CD8-positive, alpha-beta T cell (primary cell): ENCODE measurements at regions of chr18 and their contacts with region 1.

Region 1: GRCh38 chr18:61817086-61817485 is 75.7 kb downstream of the RNF152 start:
- DNase-seq: no peak
- ATAC-seq: no peak
- H3K4me3 ChIP-seq: no peak overlapping the region
- H3K4me3 Mint-ChIP-seq: no peak overlapping the region
- H3K27ac ChIP-seq: no peak overlapping the region
- H3K27ac Mint-ChIP-seq: no peak overlapping the region
- H3K4me1 ChIP-seq: no peaks in the 10 kb centered on the region
- H3K4me1 Mint-ChIP-seq: no peaks in the 10 kb centered on the region
- H3K27me3 ChIP-seq: no peaks in the 10 kb centered on the region
- H3K27me3 Mint-ChIP-seq: no peaks in the 10 kb centered on the region
- CTCF ChIP-seq: no peak

Region 2: DNA sequence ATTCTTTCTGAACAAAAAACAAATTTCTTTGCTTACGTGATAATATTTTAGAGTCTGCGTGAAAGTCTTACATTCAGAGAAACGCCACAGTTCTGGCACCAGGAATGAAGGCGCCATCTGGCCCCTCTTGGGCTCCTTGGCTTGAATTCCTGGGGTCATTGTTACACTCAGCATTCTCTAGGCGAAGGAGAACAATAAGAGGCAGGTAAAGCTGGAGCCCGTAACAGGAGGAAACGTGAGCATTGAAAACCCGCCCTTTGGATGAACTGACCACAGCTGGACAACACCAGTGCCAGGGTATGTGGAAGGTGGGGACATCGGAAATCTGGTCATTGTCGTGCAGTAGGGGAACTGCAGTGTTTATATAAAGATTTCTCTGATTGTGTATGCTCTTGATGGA is 69.1 kb before region 1 on chr18:
- CTCF ChIA-PET with region 1: no interaction called
- POLR2A ChIA-PET with region 1: no interaction called
- intact Hi-C with region 1: loop called in 1 of 2 experiments (anchors 5 kb)
- DNase-seq: no peak
- ATAC-seq: no peak
- H3K4me3 ChIP-seq: no peak overlapping the region
- H3K4me3 Mint-ChIP-seq: no peak overlapping the region
- H3K27ac ChIP-seq: no peak overlapping the region
- H3K27ac Mint-ChIP-seq: no peak overlapping the region
- H3K4me1 ChIP-seq: no peaks in the 10 kb centered on the region
- H3K4me1 Mint-ChIP-seq: no peaks in the 10 kb centered on the region
- H3K27me3 ChIP-seq: no peaks in the 10 kb centered on the region
- H3K27me3 Mint-ChIP-seq: peaks cover 5% of the 10 kb centered on the region
- CTCF ChIP-seq: no peak

Region 3: DNA sequence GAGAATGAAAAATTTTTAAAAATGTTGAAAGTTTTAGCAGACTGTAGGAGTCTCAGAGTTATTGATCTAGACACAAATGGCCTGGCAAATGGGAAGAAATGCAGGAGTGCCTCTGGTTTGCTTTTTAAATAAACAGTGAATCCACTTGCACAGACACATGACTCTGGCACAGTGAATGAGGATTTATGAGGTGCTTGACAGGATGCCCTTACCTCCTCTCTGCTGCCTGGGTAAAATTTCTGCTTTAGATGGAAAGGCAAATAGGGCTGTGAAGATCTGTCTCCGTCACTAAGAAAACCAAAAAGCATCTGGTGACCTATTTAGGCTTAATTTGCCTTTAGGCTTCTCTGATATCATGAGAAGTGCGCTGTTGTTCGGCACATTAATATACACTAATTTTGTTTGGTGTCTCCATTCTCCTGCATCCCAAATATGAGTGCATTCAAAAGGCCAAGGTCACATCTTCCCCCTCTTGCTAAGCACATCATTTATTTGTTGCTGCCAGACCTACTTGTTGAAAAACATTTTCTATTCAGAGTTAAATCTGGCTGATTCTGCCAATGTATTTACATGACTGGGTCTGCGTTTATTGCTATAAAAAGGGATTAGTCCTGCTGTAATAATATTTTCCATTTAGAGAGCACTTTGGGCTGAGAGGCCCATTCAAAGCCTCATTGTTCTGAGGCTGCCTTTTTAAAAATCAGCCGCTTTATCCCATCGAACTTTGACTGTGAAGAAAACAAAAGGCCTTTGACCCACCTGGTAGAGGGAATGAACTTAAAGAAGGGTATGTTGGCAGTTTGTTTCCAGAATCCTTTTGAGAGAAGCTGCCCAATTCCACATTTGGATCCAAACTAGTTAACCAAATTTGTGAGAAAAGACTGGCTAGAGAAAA is 19.1 kb before region 1 on chr18:
- CTCF ChIA-PET with region 1: no interaction called
- POLR2A ChIA-PET with region 1: no interaction called
- intact Hi-C with region 1: no loop called
- DNase-seq: no peak
- ATAC-seq: no peak
- H3K4me3 ChIP-seq: no peak overlapping the region
- H3K4me3 Mint-ChIP-seq: no peak overlapping the region
- H3K27ac ChIP-seq: no peak overlapping the region
- H3K27ac Mint-ChIP-seq: no peak overlapping the region
- H3K4me1 ChIP-seq: no peaks in the 10 kb centered on the region
- H3K4me1 Mint-ChIP-seq: no peaks in the 10 kb centered on the region
- H3K27me3 ChIP-seq: no peaks in the 10 kb centered on the region
- H3K27me3 Mint-ChIP-seq: no peaks in the 10 kb centered on the region
- CTCF ChIP-seq: no peak

Region 4: GRCh38 chr18:61842146-61842545 is 25.1 kb after region 1 on chr18:
- CTCF ChIA-PET with region 1: no interaction called
- POLR2A ChIA-PET with region 1: no interaction called
- intact Hi-C with region 1: no loop called
- DNase-seq: no peak
- ATAC-seq: no peak
- H3K4me3 ChIP-seq: no peak overlapping the region
- H3K4me3 Mint-ChIP-seq: no peak overlapping the region
- H3K27ac ChIP-seq: no peak overlapping the region
- H3K27ac Mint-ChIP-seq: no peak overlapping the region
- H3K4me1 ChIP-seq: no peaks in the 10 kb centered on the region
- H3K4me1 Mint-ChIP-seq: no peaks in the 10 kb centered on the region
- H3K27me3 ChIP-seq: peaks cover 0 to 2% of the 10 kb centered on the region in 2 experiments
- H3K27me3 Mint-ChIP-seq: peaks cover 6% of the 10 kb centered on the region
- CTCF ChIP-seq: no peak

Region 5: GRCh38 chr18:61854578-61855448 is 37.7 kb after region 1 on chr18:
- CTCF ChIA-PET with region 1: no interaction called
- POLR2A ChIA-PET with region 1: no interaction called
- intact Hi-C with region 1: no loop called
- DNase-seq: no peak
- ATAC-seq: no peak
- H3K4me3 ChIP-seq: no peak overlapping the region
- H3K4me3 Mint-ChIP-seq: no peak overlapping the region
- H3K27ac ChIP-seq: no peak overlapping the region
- H3K27ac Mint-ChIP-seq: no peak overlapping the region
- H3K4me1 ChIP-seq: no peaks in the 10 kb centered on the region
- H3K4me1 Mint-ChIP-seq: no peaks in the 10 kb centered on the region
- H3K27me3 ChIP-seq: no peaks in the 10 kb centered on the region
- H3K27me3 Mint-ChIP-seq: peaks cover 2% of the 10 kb centered on the region
- CTCF ChIP-seq: no peak

Region 6: DNA sequence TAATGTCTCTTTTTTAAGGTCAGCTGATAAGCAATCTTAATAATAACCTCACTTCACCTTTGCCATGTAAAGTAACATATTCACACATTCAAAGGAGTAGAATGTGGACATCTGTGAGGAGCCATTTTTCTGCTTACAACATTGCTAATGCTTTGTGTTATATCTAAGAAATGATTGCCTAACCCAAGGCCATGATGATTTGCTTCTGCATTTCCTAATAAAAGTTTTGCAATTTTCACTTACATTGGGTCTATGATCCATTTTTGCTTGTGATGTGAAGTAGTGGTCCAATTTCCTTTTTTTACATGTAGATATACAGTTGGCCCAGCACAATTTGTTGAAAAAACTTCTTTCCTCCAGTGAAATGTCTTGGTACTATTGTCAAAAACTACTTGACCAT is 392.0 kb after region 1 on chr18:
- CTCF ChIA-PET with region 1: no interaction called
- POLR2A ChIA-PET with region 1: no interaction called
- intact Hi-C with region 1: no loop called
- DNase-seq: no peak
- ATAC-seq: no peak
- H3K4me3 ChIP-seq: no peak overlapping the region
- H3K4me3 Mint-ChIP-seq: no peak overlapping the region
- H3K27ac ChIP-seq: no peak overlapping the region
- H3K27ac Mint-ChIP-seq: no peak overlapping the region
- H3K4me1 ChIP-seq: no peaks in the 10 kb centered on the region
- H3K4me1 Mint-ChIP-seq: peaks cover 60% of the 10 kb centered on the region
- H3K27me3 ChIP-seq: no peaks in the 10 kb centered on the region
- H3K27me3 Mint-ChIP-seq: no peaks in the 10 kb centered on the region
- CTCF ChIP-seq: no peak